Right ventricle myocardium superior (tissue), 1 donor: ENCODE measurements at regions of chr1 and their contacts with region 1.

Region 1: DNA sequence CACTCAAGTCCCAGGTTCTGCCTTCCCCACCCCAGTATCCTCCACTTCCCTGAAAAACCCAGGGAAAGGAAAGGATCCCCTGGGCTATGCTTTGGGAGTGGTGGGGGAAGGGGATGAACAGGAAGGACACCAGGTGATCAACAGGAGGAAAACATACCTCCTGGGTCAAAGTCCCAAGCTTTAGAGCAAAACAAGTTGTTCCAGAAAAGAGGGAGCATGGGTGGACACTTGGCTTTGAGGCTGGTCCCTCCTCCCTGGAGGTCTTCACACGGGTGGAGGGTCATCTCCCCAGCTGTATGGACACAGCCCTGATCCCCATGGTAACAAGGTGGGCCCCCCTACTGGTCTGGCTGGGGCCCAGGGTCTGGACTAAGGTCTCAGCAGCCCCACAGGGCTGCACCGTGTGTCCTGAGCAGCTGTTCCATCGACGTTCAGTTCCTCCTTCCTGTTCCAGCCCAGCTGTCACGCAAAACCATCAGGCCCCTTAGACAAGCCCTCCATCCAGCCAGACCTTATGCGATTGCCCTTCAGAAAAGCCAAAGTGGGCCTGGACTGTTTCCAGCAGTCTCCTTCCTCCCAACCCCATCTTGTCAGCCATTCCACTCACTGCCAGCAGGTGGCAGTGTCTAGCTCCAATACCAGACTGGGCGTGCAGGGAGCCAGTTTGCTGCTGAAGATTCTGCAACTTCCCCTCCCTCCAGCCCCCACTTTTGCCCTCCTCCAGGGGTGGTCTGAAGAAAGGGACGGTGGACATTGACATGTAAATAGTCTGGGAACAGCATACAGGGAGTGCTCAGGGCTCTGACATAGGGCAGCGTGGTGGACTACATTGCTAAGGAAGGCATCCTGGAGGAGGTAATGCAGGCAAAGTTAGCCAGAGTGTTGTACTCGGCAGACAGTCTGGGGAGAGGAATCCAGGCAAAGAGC is 2.9 kb upstream of the PDZK1IP1 start:
- DNase-seq: peak; percentile 89
- ATAC-seq: peak; percentile 51

Region 2: DNA sequence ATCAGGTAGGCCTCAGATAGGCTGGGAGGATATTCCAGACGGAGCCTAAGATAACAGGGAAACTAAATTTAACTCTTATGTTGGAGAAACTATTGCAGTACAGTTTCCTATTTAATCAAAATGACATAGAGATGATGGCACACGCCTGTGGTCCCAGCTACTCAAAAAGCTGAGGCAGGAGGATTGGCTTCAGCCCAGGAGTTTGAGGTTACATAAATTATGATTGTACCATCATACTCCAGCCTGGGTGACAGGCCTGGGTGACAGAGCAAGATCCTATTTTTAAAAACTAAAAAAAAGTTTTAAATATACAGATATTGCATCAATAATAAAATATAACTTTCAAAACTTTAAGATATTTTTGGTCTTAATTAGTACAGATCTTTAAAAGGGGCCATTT is 64.5 kb after region 1 on chr1:
- intact Hi-C with region 1: loop called (anchors 5 kb)
- DNase-seq: no peak
- ATAC-seq: no peak

Region 3: DNA sequence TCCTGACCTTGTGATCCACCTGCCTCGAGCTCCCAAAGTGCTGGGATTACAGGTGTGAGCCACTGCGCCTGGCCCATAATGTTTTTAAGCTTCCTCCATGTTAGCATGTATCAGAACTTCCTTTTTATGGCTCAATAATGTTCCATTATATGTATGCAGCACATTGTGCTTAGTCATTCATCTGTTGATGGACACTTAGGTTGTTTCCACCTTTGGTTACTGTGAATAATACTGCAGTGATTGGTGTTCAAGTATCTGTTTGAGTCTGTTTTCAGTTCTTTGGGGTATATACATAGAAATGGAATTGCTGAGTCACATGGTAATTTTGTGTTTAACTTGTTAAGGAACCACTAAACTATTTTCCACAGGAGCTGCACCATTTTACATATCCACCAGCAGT is 158.6 kb after region 1 on chr1:
- intact Hi-C with region 1: no loop called
- DNase-seq: no peak
- ATAC-seq: no peak

Region 4: DNA sequence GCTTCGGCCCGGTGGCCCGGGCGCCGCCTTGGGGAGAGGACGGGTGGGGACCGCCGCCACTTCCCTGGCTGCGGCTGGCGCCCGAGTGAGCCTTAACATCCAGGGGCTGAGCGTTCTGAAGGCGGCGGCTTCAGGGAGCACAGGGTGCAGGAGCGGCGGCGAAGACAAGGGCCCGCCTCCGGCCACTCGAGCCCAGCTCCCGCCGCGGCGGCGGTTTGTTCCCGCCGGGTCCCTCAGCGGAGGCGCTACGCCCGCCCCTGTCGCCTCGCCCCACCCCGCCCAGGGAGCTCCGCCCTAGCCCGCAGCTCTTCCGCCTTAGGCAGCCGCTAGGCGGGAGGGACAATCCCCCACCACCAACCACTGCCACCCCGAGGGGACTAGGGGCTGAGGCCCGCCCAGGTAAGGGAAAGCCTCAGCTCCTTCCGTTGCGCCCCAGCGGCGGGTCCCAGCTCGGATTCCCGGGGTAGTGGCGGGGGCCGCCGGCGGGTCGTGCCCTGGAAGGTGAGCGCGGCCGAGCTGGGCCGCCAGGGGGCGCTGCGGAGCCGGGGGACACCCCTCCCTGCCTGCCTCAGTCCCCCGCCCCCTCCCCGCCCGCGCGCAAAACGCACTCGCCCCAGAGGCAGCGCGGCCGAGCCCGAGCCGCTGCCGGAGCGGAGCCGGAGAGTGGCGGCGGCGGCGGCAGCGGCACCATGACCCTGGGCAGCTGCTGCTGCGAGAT is 244.9 kb after region 1 on chr1 and contains the start of gene FOXD2:
- intact Hi-C with region 1: loop called (anchors 10 kb)
- DNase-seq: peak; percentile 88
- ATAC-seq: peak; percentile 96
- total RNA-seq, gene FOXD2: not detected